Left cardiac atrium (tissue), 4 donors: ENCODE measurements at regions of chr17 and their contacts with region 1.

Region 1: GRCh38 chr17:78523930-78524655 is 53.1 kb downstream of the DNAH17 start:
- DNase-seq: no peak
- ATAC-seq: no peak

Region 2: DNA sequence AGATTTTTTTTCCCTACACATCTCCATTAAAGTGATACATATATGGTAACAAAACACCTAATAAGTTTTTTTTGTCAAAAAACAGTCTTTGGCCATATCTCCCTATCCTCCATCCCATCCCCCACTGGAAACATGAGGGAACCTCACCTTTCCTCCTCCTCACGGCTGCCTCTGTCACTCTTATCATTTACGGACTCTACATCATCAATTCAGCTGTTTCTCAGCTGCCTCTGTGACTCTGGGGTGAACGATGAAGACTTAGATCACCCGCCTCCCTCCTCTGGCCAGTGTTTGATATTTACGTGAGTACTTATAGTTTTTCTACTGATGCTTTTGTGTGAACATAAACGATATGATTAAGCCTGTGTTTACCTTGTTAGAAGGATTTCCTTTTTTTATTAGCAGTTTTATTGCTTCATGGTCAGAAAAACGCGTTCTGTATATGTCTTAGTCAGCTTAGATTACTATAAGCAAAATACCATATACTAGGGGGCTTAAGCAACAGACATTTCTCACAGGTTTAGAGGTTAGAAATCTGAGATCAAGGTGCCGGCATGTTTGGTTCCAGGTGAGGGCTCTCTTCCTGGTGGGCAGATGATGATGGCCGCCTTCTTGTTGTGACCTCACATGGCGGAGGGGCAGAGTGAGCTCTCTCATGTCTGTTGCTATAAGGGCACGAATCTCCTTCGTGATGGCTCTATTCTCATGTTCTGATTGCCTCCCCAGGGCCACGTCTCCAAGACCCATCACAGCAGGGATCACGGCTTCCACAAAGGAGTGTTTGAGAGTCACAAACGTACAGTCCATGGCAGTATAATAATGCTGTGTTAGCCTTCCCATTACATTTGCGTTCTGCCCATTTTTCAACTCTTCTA is 21.0 kb after region 1 on chr17:
- intact Hi-C with region 1: loop called in 1 of 2 experiments (anchors 1 kb)
- DNase-seq: no peak
- ATAC-seq: no peak